Vagina (tissue), 2 donors: ENCODE measurements at regions of chr2 and their contacts with region 1.

Region 1: DNA sequence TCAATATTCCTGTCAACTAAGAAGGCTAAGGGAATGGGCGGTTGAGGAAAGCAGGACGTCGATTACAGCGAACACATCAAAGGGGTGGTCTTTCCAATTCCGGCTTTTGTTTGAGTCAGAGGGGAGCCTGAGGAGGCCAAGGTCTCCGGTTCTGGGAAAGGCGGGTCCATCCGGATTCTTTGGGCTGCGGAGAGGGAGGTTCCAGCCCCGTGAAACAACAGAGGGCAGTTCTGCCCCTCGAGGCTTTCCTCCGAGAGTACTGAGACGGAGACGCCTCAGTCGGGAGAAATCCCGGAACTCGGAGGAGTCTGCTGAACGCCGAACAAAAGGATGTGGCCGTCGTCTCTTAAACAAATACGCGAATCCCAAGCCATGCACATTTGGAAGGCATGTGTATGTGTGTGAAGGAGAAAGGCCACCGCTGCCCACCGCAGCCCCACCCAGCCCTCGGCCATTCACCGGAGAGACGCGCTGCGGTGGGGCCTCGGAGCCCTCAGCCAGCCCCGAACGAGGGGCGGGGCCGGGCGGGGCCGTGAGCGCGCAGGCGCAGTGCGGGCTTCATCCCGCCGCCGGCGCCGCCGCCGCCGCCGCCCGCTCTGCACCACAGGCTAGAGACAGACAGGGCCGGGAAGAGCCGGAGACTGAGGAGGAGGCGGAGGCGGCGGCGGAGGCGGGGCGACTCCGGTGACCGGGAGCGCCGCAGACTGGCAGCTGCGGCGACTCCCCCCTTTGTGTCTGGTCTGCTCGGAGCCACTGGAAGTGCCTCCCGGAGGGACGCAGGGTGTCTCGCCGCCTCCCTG is at the start of gene BMPR2:
- DNase-seq: peak in 1 of 2 donors; percentile 94
- H3K4me3 ChIP-seq: peak within 1 kb of the TSS; percentile 89 to 91
- H3K27ac ChIP-seq: peak within 1 kb of the TSS; percentile 99
- H3K4me1 ChIP-seq: peaks cover 15% of the 10 kb centered on the region
- H3K27me3 ChIP-seq: no peaks in the 10 kb centered on the region
- CTCF ChIP-seq: no peak
- POLR2A ChIP-seq: peak in 1 of 2 donors; percentile 87
- total RNA-seq, gene BMPR2: 47.9 TPM

Region 2: DNA sequence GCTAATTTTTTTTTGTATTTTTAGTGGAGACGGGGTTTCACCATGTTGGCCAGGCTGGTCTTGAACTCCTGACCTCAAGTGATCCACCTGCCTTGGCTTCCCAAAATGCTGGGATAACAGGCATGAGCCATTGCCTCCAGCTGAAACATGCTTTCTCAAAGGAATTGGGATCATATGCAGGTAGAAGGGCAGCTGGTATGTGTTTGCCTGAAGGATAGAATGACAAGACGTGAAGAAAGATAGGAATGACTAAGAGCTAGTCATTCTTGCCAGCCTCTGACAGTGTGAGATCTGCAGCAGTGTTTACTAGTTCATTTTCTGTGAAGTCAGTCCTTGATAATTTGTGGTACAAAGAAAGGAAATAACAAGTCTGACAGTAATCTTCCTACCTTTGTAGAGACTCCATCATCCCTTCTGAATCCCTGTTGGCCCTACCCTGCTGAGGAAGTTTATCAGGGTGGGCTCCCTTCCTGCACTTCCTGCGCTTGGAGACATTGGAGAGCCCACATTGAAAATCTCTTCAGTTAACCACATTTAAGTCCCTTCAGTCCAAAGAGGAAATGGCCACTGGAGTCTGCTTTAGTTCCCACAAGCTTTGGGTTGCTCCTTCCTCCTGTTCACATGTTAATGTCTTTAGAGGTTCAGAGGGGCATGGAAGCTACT is 1245.2 kb before region 1 on chr2:
- intact Hi-C with region 1: no loop called
- DNase-seq: peak in 1 of 2 donors; percentile 82
- H3K4me3 ChIP-seq: peak overlapping the region in 1 of 2 donors; percentile 10
- H3K27ac ChIP-seq: peak overlapping the region; percentile 74
- H3K4me1 ChIP-seq: peaks cover 93% of the 10 kb centered on the region
- H3K27me3 ChIP-seq: no peaks in the 10 kb centered on the region
- CTCF ChIP-seq: no peak
- POLR2A ChIP-seq: no peak

Region 3: GRCh38 chr2:202265467-202266277 is 110.1 kb before region 1 on chr2 and contains the start of gene NOP58:
- intact Hi-C with region 1: loop called (anchors 5 kb)
- DNase-seq: peak; percentile 96 to 97
- H3K4me3 ChIP-seq: peak within 1 kb of the TSS; percentile 93
- H3K27ac ChIP-seq: peak within 1 kb of the TSS; percentile 99
- H3K4me1 ChIP-seq: peaks cover 37% of the 10 kb centered on the region
- H3K27me3 ChIP-seq: no peaks in the 10 kb centered on the region
- CTCF ChIP-seq: no peak
- POLR2A ChIP-seq: peak in 1 of 2 donors; percentile 97
- total RNA-seq, gene NOP58: 80.8 TPM